Heart left ventricle (tissue), 16 donors: ENCODE measurements at regions of chr11 and their contacts with region 1.

Region 1: DNA sequence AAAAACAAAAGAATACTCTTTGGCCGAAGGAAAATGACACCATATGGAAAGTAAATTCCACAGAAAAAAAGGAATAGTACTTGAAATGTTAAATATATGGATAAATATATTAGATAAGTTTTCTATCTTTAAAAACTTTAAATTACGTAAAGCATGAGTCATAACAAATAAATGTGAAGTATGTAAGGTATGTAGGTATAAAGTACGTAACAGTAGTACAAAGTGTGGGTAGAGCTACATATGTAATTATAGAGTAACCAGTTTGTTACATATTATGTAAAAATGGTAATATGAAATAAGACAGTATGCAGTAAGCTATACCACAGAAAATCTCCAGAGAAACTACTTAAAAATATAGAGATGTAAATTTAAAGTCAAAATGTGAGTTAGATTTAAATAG is 582.3 kb upstream of the CHORDC1 start:
- DNase-seq: no peak
- ATAC-seq: no peak
- H3K4me3 ChIP-seq: no peak overlapping the region
- H3K27ac ChIP-seq: no peak overlapping the region
- H3K4me1 ChIP-seq: no peaks in the 10 kb centered on the region
- H3K27me3 ChIP-seq: no peaks in the 10 kb centered on the region
- CTCF ChIP-seq: no peak
- POLR2A ChIP-seq: no peak

Region 2: GRCh38 chr11:90700789-90701439 is 104.3 kb before region 1 on chr11:
- intact Hi-C with region 1: no loop called
- DNase-seq: no peak
- ATAC-seq: no peak
- H3K4me3 ChIP-seq: no peak overlapping the region
- H3K27ac ChIP-seq: no peak overlapping the region
- H3K4me1 ChIP-seq: no peaks in the 10 kb centered on the region
- H3K27me3 ChIP-seq: no peaks in the 10 kb centered on the region
- CTCF ChIP-seq: no peak
- POLR2A ChIP-seq: no peak

Region 3: GRCh38 chr11:90840071-90840470 is 34.9 kb after region 1 on chr11:
- intact Hi-C with region 1: no loop called
- DNase-seq: no peak
- ATAC-seq: no peak
- H3K4me3 ChIP-seq: no peak overlapping the region
- H3K27ac ChIP-seq: no peak overlapping the region
- H3K4me1 ChIP-seq: no peaks in the 10 kb centered on the region
- H3K27me3 ChIP-seq: no peaks in the 10 kb centered on the region
- CTCF ChIP-seq: no peak
- POLR2A ChIP-seq: no peak

Region 4: DNA sequence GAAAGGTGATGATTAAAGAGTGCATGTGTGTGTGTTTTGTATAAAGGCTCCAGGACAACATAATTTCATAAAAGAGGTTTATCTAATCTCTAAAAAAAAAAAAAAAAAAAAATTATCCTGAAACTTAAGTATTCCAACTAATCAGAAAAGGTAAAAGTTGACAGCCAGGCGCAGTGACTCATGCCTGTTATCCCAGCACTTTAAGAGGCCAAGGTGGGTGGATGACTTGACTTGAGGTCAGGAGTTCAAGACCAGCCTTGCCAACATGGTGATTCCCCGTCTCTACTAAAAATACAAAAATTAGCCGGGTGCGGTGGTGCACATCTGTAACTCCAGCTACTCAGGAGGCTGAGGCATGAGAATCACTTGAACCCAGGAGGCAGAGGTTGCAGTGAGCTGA is 50.4 kb after region 1 on chr11:
- intact Hi-C with region 1: loop called in 1 of 10 experiments (anchors 5 kb)
- DNase-seq: no peak
- ATAC-seq: no peak
- H3K4me3 ChIP-seq: no peak overlapping the region
- H3K27ac ChIP-seq: no peak overlapping the region
- H3K4me1 ChIP-seq: no peaks in the 10 kb centered on the region
- H3K27me3 ChIP-seq: no peaks in the 10 kb centered on the region
- CTCF ChIP-seq: no peak
- POLR2A ChIP-seq: no peak

Region 5: GRCh38 chr11:90908074-90908473 is 102.9 kb after region 1 on chr11:
- intact Hi-C with region 1: no loop called
- DNase-seq: no peak
- ATAC-seq: no peak
- H3K4me3 ChIP-seq: no peak overlapping the region
- H3K27ac ChIP-seq: no peak overlapping the region
- H3K4me1 ChIP-seq: no peaks in the 10 kb centered on the region
- H3K27me3 ChIP-seq: no peaks in the 10 kb centered on the region
- CTCF ChIP-seq: peak in 2 of 12 donors; percentile 11 to 16
- POLR2A ChIP-seq: no peak